ENCODE measurements at regions of chr12 and their contacts with region 1.

Region 1: GRCh38 chr12:51083126-51083833 is at the start of gene CSRNP2:
- DNase-seq: peak; percentile 92
- H3K4me3 ChIP-seq: peak within 1 kb of the TSS; percentile 86 to 94 (median 91)
- H3K27ac ChIP-seq: peak within 1 kb of the TSS; percentile 52
- H3K4me1 ChIP-seq: peaks cover 8% of the 10 kb centered on the region
- H3K27me3 ChIP-seq: no peaks in the 10 kb centered on the region
- CTCF ChIP-seq: no peak
- total RNA-seq, gene CSRNP2: 40.1 to 53.3 TPM

Region 2: GRCh38 chr12:50839042-50839441 is 244.2 kb before region 1 on chr12:
- CTCF ChIA-PET with region 1: interaction called, 12 read pairs
- dilution Hi-C with region 1: no loop called
- in situ Hi-C with region 1: no loop called
- intact Hi-C with region 1: no loop called
- DNase-seq: peak; percentile 36
- H3K4me3 ChIP-seq: no peak overlapping the region
- H3K27ac ChIP-seq: no peak overlapping the region
- H3K4me1 ChIP-seq: peaks cover 6% of the 10 kb centered on the region
- H3K27me3 ChIP-seq: no peaks in the 10 kb centered on the region
- CTCF ChIP-seq: no peak

Region 3: GRCh38 chr12:51172515-51173431 is 89.5 kb after region 1 on chr12 and contains the start of gene TFCP2:
- CTCF ChIA-PET with region 1: no interaction called
- dilution Hi-C with region 1: no loop called
- in situ Hi-C with region 1: no loop called
- intact Hi-C with region 1: loop called (anchors 2 kb)
- DNase-seq: peak; percentile 93
- H3K4me3 ChIP-seq: peak within 1 kb of the TSS; percentile 67 to 80 (median 74)
- H3K27ac ChIP-seq: peak within 1 kb of the TSS; percentile 93
- H3K4me1 ChIP-seq: no peaks in the 10 kb centered on the region
- H3K27me3 ChIP-seq: no peaks in the 10 kb centered on the region
- CTCF ChIP-seq: no peak
- total RNA-seq, gene TFCP2: 12.0 to 32.7 TPM

Region 4: DNA sequence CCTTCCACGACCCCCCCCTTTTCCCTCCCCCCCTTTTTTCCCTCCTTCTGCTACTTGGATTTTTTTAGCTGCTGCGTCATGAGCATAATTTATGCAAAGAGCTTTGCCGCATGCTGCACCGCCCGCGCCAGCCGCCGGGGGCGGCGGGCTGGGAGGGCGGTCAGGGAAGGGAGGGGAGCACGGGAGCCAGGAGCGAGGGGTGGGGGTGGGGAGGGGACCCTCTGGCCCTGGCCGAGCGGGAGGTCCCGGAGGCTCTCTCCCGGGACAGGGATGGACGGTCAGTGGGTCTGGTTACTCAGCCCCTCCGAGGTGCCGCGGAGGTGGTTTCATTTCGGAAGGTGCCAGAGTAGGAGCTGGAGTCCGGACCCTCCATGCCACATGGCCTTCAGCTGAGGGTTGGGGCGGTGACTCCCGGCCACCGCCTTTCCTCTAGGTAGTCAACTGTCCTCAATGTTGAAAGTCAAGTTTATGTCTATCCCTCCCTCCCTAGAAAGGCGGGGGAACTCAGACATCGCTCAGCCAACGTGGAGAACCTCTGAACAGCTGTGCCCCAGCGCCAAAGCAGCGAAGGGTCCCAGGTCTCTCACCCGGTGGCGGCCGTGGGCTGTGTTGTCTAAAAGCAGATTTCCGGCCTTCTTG is 134.8 kb after region 1 on chr12 and contains the start of gene POU6F1:
- CTCF ChIA-PET with region 1: no interaction called
- dilution Hi-C with region 1: no loop called
- in situ Hi-C with region 1: no loop called
- intact Hi-C with region 1: loop called (anchors 2 kb)
- DNase-seq: peak; percentile 61
- H3K4me3 ChIP-seq: peak within 1 kb of the TSS; percentile 55 to 86 (median 66)
- H3K27ac ChIP-seq: peak within 1 kb of the TSS; percentile 25
- H3K4me1 ChIP-seq: peaks cover 10% of the 10 kb centered on the region
- H3K27me3 ChIP-seq: no peaks in the 10 kb centered on the region
- CTCF ChIP-seq: peak; percentile 33 to 64
- total RNA-seq, gene POU6F1: 2.6 to 3.5 TPM

Region 5: GRCh38 chr12:51293696-51294095 is 210.4 kb after region 1 on chr12:
- CTCF ChIA-PET with region 1: no interaction called
- dilution Hi-C with region 1: no loop called
- in situ Hi-C with region 1: no loop called
- intact Hi-C with region 1: no loop called
- DNase-seq: peak; percentile 17
- H3K4me3 ChIP-seq: no peak overlapping the region
- H3K27ac ChIP-seq: no peak overlapping the region
- H3K4me1 ChIP-seq: no peaks in the 10 kb centered on the region
- H3K27me3 ChIP-seq: no peaks in the 10 kb centered on the region
- CTCF ChIP-seq: no peak

Region 6: GRCh38 chr12:51341259-51342007 is 258.2 kb after region 1 on chr12:
- CTCF ChIA-PET with region 1: no interaction called
- dilution Hi-C with region 1: no loop called
- in situ Hi-C with region 1: loop called in 1 of 2 experiments (anchors 25 kb)
- intact Hi-C with region 1: no loop called
- DNase-seq: peak; percentile 48
- H3K4me3 ChIP-seq: no peak overlapping the region
- H3K27ac ChIP-seq: no peak overlapping the region
- H3K4me1 ChIP-seq: peaks cover 2% of the 10 kb centered on the region
- H3K27me3 ChIP-seq: no peaks in the 10 kb centered on the region
- CTCF ChIP-seq: peak; percentile 99 to 100